HEK293 (cell line): ENCODE measurements at regions of chr6 and their contacts with region 1.

Region 1: GRCh38 chr6:135451693-135452092 is 45.8 kb downstream of the AHI1 start:
- H3K4me3 ChIP-seq: no peak overlapping the region
- H3K27ac ChIP-seq: no peak overlapping the region
- H3K4me1 ChIP-seq: no peaks in the 10 kb centered on the region
- CTCF ChIP-seq: peak; percentile 47

Region 2: DNA sequence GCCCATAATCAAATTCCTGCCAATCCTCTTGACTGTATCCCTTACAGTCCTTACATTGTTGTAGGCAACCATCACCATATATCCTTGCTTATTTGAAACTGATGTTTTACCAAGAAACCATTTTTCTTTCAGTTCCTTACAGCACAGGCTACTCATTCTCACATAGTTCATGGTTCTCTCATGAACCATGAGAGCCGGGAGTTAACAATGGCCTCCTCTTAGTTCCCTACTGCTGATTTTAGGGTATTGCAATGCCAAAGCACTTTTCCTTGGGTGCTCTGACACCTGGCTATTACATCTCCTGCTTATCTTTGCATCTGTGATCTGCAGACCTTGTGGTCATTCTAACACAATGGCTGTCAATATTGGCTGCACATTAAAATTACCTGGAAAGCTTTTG is 137.2 kb before region 1 on chr6:
- CTCF ChIA-PET with region 1: no interaction called
- POLR2A ChIA-PET with region 1: no interaction called
- H3K4me3 ChIP-seq: no peak overlapping the region
- H3K27ac ChIP-seq: no peak overlapping the region
- H3K4me1 ChIP-seq: no peaks in the 10 kb centered on the region
- CTCF ChIP-seq: no peak

Region 3: DNA sequence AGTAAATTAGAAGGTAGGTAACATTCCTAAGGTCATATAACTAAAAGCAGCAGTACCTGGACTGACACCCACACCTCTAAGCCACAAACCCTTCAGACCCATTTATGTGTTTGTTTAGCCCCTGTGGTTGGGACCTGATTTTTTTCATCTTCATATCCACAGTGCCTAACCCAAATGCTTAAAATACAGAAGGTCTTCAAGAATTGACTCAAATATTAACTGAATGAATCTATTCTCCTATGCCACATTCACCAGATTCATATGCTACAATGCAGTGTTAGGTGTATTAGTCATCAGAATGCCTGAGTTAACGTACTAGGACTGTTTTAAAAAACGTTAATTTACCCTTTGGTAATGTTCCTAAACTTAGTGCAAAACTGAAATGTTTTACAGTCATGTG is 78.9 kb before region 1 on chr6:
- CTCF ChIA-PET with region 1: no interaction called
- POLR2A ChIA-PET with region 1: no interaction called
- H3K4me3 ChIP-seq: no peak overlapping the region
- H3K27ac ChIP-seq: no peak overlapping the region
- H3K4me1 ChIP-seq: no peaks in the 10 kb centered on the region
- CTCF ChIP-seq: no peak

Region 4: DNA sequence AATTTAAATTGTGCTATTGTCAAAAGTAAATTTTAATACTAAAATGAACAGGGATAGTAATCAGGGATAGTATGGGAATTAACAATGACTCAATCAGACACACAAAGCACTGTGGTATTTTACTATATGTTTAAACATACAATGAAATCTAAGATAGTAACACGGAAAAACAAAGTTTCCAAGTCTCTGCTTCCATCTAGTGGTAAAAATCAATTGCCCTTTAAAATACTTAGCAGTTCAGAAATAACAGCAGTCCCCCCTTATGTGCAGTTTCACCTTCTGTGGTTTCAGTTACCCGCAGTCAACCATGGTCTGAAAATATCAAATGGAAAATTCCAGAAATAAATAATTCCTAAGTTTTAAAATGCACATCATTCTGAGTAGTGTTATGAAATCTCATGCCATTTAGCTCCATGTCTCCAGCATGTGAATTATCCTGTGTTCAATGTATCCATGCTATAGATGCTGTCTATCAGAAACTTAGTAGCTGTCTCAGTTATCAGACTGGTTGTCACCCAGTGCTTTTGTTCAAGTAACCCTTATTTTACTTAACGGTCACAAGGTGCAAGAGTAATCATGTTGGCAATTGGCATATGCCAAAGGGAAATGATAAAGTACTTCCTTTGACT is 12.7 kb before region 1 on chr6:
- CTCF ChIA-PET with region 1: interaction called, 13 read pairs
- POLR2A ChIA-PET with region 1: no interaction called
- H3K4me3 ChIP-seq: no peak overlapping the region
- H3K27ac ChIP-seq: no peak overlapping the region
- H3K4me1 ChIP-seq: no peaks in the 10 kb centered on the region
- CTCF ChIP-seq: no peak

Region 5: GRCh38 chr6:135465307-135465706 is 13.6 kb after region 1 on chr6:
- CTCF ChIA-PET with region 1: interaction called, 19 read pairs
- POLR2A ChIA-PET with region 1: no interaction called
- H3K4me3 ChIP-seq: no peak overlapping the region
- H3K27ac ChIP-seq: no peak overlapping the region
- H3K4me1 ChIP-seq: no peaks in the 10 kb centered on the region
- CTCF ChIP-seq: no peak

Region 6: DNA sequence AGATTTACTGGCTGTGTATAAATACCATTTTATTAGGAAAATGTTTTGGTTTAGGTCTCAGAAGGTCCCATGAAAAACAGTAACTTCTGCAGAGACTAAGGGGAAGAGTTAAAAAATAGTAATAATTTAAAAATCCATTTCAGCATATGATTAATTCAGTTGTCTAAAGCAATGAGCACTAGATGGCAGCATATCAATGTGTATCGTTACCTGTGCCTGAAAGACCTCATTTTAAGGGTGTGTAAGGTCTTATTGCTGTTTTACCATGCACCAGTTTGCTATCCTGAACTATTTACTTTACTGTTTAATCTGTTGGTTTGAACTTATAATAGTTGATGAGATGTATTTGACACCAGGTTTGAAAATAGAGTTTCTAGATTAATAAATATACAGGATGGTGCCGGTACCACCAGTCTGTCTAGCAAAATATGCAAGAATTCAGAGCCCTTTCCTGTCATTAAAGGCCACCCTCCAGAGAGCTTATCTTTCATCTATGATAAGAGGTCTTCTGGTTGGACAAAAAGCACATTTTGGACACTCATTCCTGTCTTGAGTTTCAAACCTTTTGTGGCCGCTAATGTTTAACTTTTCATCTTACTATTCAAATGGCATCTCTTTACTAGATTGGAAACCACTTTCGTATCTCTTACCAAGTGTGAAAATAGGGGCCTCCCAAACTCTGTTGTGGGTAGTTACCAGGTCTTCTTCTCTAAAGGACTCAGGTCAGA is 54.7 kb after region 1 on chr6:
- CTCF ChIA-PET with region 1: interaction called, 17 read pairs
- POLR2A ChIA-PET with region 1: no interaction called
- H3K4me3 ChIP-seq: no peak overlapping the region
- H3K27ac ChIP-seq: no peak overlapping the region
- H3K4me1 ChIP-seq: peaks cover 3% of the 10 kb centered on the region; the same call in 1 of the 2 replicates
- CTCF ChIP-seq: 0 out of 2 replicates have a peak, but pooled peaks have one; percentile 13

Region 7: DNA sequence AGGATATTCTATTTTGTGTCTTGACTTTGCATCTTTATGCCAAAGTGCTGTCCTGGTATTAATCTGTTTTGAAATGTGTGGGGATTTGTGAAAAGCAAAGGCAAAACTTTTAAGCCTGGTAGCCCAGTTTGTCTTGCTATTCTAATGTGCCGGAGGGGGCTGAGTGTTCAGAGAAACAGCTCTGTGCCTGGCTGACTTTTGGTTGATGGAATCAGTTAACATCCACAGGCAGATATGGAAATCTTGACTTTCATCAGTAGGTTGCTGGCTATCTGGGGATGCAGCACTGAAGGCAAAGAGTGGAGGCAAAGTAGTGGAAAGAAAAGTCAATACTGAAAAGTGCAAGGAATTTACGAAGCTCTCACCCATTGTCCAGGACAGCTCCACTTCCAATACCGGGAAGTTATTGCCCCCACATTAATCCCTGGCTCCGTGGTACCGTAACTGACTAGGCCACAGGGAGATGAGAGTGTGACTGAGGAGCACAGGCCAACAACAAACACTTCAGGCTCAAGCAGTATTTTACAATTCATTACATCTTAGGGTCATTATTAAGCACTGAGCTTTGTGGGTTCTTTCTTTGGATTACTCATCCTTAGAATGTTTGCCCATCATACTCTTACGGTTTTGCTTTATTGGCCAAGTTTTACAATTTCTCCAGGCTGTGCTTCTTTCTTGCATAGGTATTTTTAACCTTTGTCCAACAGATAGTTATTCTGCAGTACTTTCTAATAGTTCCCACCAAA is 633.9 kb after region 1 on chr6:
- CTCF ChIA-PET with region 1: no interaction called
- POLR2A ChIA-PET with region 1: interaction called, 11 read pairs
- H3K4me3 ChIP-seq: no peak overlapping the region
- H3K27ac ChIP-seq: no peak overlapping the region
- H3K4me1 ChIP-seq: peaks cover 5% of the 10 kb centered on the region; the same call in 1 of the 2 replicates
- CTCF ChIP-seq: no peak